ENCODE measurements at regions of chr12 and their contacts with region 1.

Region 1: GRCh38 chr12:818733-819132 is 66.4 kb downstream of the WNK1 start:
- DNase-seq: no peak
- H3K4me3 ChIP-seq: no peak overlapping the region
- H3K27ac ChIP-seq: no peak overlapping the region
- H3K4me1 ChIP-seq: peaks cover 0 to 12% of the 10 kb centered on the region in 2 donors
- H3K27me3 ChIP-seq: no peaks in the 10 kb centered on the region
- CTCF ChIP-seq: peak in 2 of 3 experiments; percentile 4 to 5

Region 2: GRCh38 chr12:143964-144649 is 674.6 kb before region 1 on chr12:
- intact Hi-C with region 1: no loop called
- DNase-seq: no peak
- H3K4me3 ChIP-seq: no peak overlapping the region
- H3K27ac ChIP-seq: no peak overlapping the region
- H3K4me1 ChIP-seq: no peaks in the 10 kb centered on the region
- H3K27me3 ChIP-seq: no peaks in the 10 kb centered on the region
- CTCF ChIP-seq: no peak

Region 3: DNA sequence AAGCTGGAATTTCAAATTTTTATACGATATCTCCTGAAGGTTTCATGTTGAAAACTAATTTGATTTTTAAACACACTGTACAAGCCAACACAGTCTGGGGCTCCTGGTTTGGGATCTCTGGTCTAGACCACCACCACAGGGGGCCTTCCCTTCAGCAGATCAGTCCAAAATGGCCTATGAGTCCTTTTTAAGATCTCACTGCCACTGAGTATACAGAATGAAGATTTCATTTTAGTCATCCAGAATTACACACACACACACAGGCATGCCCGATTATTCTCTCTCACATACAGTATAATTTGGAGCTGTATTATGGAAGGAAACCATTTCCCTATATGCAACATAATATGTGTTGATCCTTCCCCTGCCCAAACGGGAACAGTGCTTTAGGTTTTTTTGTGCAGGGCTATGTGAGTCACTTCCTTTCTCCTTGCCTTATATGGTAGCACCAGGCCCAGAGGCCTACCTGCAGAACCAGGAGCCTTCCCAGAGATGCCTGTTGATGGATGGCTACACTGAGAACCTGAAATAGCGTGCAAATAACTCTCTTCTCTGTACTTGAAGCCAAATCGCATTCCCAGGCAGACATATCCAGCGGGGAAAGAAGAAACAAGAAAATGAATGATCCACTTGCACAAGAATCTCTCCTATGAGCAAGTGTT is 94.4 kb before region 1 on chr12:
- intact Hi-C with region 1: no loop called
- DNase-seq: no peak
- H3K4me3 ChIP-seq: no peak overlapping the region
- H3K27ac ChIP-seq: no peak overlapping the region
- H3K4me1 ChIP-seq: no peaks in the 10 kb centered on the region
- H3K27me3 ChIP-seq: no peaks in the 10 kb centered on the region
- CTCF ChIP-seq: no peak

Region 4: GRCh38 chr12:779745-780734 is 38.7 kb before region 1 on chr12:
- intact Hi-C with region 1: loop called (anchors 5 kb)
- DNase-seq: no peak
- H3K4me3 ChIP-seq: peak overlapping the region; percentile 12 to 44
- H3K27ac ChIP-seq: peak overlapping the region; percentile 48 to 55
- H3K4me1 ChIP-seq: peaks cover 0 to 40% of the 10 kb centered on the region in 2 donors
- H3K27me3 ChIP-seq: no peaks in the 10 kb centered on the region
- CTCF ChIP-seq: no peak

Region 5: GRCh38 chr12:851913-852312 is 33.2 kb after region 1 on chr12:
- intact Hi-C with region 1: loop called (anchors 5 kb)
- DNase-seq: no peak
- H3K4me3 ChIP-seq: peak overlapping the region in 1 of 2 donors; percentile 38
- H3K27ac ChIP-seq: peak overlapping the region; percentile 41 to 54
- H3K4me1 ChIP-seq: peaks cover 0 to 24% of the 10 kb centered on the region in 2 donors
- H3K27me3 ChIP-seq: no peaks in the 10 kb centered on the region
- CTCF ChIP-seq: no peak

Region 6: DNA sequence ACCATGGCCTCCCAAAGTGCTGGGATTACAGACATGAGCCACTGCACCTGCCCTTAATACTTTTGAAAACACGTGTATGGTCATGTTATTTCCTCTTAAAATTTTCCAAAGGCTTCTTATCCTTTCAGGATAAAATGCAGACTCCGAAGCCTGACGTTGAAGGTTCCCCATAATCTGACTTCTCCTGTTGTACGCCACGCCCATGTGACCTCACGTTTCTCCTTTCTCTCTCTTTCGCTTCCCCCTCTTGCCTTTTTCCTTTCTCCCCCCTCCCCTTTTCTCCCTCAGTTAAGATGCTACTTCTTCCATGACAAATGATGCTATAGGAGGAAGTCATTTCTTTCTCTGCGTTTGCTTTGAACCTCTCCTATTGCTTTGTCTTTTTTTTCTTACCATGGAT is 509.7 kb after region 1 on chr12:
- intact Hi-C with region 1: no loop called
- DNase-seq: peak; percentile 21 to 71
- H3K4me3 ChIP-seq: no peak overlapping the region
- H3K27ac ChIP-seq: no peak overlapping the region
- H3K4me1 ChIP-seq: no peaks in the 10 kb centered on the region
- H3K27me3 ChIP-seq: no peaks in the 10 kb centered on the region
- CTCF ChIP-seq: no peak

Measured in ascending aorta (tissue), 2 donors.